ENCODE measurements at regions of chr5 and their contacts with region 1.

Region 1: DNA sequence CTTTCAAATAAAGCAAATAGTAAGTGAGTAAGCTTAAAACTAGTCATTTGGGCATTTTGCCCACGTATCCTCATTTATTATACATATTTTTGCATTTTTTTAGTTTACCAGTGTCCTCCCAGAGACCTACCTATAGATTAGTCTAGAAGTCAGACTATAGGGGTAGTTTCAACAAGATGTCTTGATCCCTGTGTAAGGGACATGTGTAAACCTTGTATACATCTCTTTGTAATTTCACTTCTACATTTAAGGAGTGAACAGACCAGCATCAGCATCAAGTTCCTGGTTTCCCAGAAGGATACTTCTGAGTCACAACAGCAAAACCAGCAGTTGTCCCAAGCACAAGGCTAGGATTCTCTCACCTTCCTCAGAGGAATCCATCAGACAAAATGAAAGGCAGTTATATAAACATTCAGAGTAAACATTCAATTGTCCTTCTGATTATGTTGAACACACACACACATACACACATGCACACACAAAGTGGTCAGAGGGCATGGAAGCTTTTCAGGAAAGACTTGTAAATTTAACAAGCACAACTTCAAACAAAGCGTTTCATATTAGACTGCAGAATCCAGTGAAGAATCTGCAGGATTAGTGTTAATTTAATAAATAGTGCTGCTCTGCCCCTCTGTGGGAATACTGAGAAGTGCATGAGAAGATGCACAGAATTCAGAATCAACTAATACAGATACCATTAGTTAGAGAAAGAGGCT is 55.4 kb downstream of the HINT1 start:
- DNase-seq: peak; percentile 58
- CTCF ChIP-seq: peak; percentile 64

Region 2: GRCh38 chr5:130109152-130109551 is 1000.5 kb before region 1 on chr5:
- in situ Hi-C with region 1: loop called (anchors 25 kb)
- DNase-seq: peak; percentile 10
- CTCF ChIP-seq: peak; percentile 43

Region 3: DNA sequence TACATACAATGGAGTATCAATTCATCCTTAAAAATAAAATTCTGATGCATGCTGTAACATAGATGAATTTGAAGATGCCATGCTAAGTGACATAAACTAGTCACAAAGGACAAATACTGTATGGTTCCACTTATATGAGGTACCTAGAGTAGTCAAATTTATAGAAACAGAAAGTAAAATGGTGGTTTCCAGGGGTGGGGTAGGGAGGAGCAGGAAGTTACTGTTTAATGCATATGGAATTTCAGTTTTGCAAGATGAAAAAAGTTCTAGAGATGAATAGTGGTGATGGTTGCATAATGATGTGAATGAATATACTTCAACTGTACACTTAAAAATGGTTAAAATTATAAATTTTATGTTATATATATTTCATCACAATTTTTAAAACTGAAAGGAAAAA is 744.4 kb after region 1 on chr5:
- in situ Hi-C with region 1: no loop called
- DNase-seq: no peak
- CTCF ChIP-seq: no peak